ENCODE measurements at regions of chr10 and their contacts with region 1.

Region 1: GRCh38 chr10:6014241-6014761 is 37.0 kb upstream of the IL15RA start:
- DNase-seq: peak; percentile 33 to 87
- ATAC-seq: peak; percentile 70 to 84 (median 82)
- H3K4me3 ChIP-seq: no peak overlapping the region
- H3K4me3 Mint-ChIP-seq: no peak overlapping the region
- H3K27ac ChIP-seq: peak overlapping the region; percentile 59
- H3K27ac Mint-ChIP-seq: peak overlapping the region; percentile 43
- H3K4me1 ChIP-seq: peaks cover 8% of the 10 kb centered on the region
- H3K4me1 Mint-ChIP-seq: peaks cover 0 to 8% of the 10 kb centered on the region in 2 donors
- H3K27me3 ChIP-seq: no peaks in the 10 kb centered on the region
- H3K27me3 Mint-ChIP-seq: peaks cover 0 to 4% of the 10 kb centered on the region in 2 donors
- CTCF ChIP-seq: peak; percentile 77

Region 2: GRCh38 chr10:6144406-6145165 is 130.3 kb after region 1 on chr10:
- intact Hi-C with region 1: loop called (anchors 10 kb)
- DNase-seq: peak; percentile 86 to 93
- ATAC-seq: peak; percentile 94 to 96 (median 94)
- H3K4me3 ChIP-seq: peak overlapping the region; percentile 72
- H3K4me3 Mint-ChIP-seq: peak overlapping the region; percentile 96
- H3K27ac ChIP-seq: peak overlapping the region; percentile 80
- H3K27ac Mint-ChIP-seq: peak overlapping the region; percentile 83 to 89
- H3K4me1 ChIP-seq: peaks cover 45% of the 10 kb centered on the region
- H3K4me1 Mint-ChIP-seq: peaks cover 35 to 45% of the 10 kb centered on the region in 2 donors
- H3K27me3 ChIP-seq: no peaks in the 10 kb centered on the region
- H3K27me3 Mint-ChIP-seq: peaks cover 0 to 5% of the 10 kb centered on the region in 2 donors
- CTCF ChIP-seq: no peak

Measured in natural killer cell (primary cell).